Activated CD4-positive, alpha-beta T cell treated with anti-CD3 and anti-CD28 coated beads, Interleukin-2, amount 10 ng/mL, durations not matched to agents 24 days and 14 days (primary cell): ENCODE measurements at regions of chr17 and their contacts with region 1.

Region 1: GRCh38 chr17:31437720-31438420 is 46.4 kb downstream of the RAB11FIP4 start:
- DNase-seq: no peak
- H3K4me3 Mint-ChIP-seq: no peak overlapping the region
- H3K27ac Mint-ChIP-seq: no peak overlapping the region
- H3K4me1 Mint-ChIP-seq: peaks cover 10% of the 10 kb centered on the region
- H3K27me3 Mint-ChIP-seq: peaks cover 9% of the 10 kb centered on the region

Region 2: GRCh38 chr17:31524926-31525800 is 87.3 kb after region 1 on chr17:
- intact Hi-C with region 1: loop called (anchors 1 kb)
- DNase-seq: peak; percentile 95
- H3K4me3 Mint-ChIP-seq: no peak overlapping the region
- H3K27ac Mint-ChIP-seq: no peak overlapping the region
- H3K4me1 Mint-ChIP-seq: no peaks in the 10 kb centered on the region
- H3K27me3 Mint-ChIP-seq: no peaks in the 10 kb centered on the region

Region 3: DNA sequence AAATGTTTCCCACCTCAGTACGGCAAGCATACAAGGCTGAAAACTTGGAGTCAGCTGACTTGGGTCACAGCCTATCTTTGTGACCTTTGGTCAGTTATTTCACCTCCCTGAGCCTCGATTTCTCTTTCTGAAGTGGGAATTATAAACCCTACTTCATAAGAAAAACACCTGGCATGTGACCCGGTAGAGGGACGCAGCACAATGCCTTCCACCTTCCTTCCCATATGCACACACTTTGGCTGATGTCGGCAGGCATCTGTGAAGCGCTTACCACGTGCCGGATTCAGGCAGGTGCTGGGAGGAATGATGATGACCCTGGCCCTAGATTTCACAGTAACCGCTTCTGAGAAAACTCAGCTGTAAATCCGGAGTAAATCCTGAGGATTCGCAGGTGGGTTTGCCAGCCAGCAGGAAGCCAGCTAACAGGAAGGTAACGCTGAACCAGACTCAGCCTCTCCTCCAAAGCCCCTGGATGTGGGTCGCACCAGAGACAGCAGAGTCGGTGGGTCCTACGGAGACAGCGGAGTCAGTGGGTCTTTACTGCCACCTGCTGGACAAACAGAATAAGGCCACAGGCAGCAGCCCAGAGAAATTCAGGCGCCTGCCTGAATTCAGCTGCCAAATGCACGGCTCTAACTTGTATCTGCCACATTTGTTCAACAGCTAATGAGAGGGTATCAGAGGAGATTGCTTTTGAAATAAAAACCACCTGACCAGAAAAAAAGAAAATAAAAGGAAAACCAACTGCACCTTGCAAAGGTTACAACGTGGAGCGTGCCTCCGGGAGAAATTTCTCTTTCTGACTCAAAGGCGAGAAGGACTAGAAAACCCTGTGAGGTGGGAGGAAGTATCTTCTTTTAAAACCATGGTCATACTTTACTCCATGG is 404.6 kb after region 1 on chr17:
- intact Hi-C with region 1: loop called (anchors 2 kb)
- DNase-seq: peak; percentile 90
- H3K4me3 Mint-ChIP-seq: no peak overlapping the region
- H3K27ac Mint-ChIP-seq: no peak overlapping the region
- H3K4me1 Mint-ChIP-seq: no peaks in the 10 kb centered on the region
- H3K27me3 Mint-ChIP-seq: peaks cover 17% of the 10 kb centered on the region